Heart right ventricle (tissue), 16 donors: ENCODE measurements at regions of chr5 and their contacts with region 1.

Region 1: DNA sequence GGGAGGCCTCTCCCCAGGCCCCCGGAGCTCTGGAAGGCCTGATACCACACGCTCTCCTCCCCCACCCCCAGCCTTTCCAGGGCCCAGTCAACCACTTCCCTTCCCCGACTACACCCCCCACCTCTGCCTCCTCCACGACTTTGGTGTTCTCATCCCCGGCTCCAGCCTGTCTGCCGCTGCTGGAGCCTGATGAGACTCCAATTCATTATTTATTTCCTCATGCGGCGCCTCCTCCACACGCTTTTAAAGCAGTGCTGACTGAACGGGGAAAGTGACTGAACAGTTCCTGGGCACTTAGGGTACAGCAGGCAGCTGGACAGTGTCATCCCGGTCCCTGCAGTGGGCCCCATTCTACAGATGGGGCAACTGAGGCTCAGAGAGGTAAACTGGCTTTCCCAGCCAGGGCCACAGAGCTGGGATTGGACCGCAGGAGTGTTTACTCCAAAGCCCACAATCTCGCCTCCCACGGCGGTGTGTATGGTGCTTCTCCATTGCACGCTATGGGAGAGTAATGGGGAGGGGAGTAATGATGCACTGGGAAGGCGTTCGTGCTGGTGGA is 15.9 kb upstream of the RPL26L1 start:
- DNase-seq: peak in 1 of 2 donors; percentile 61
- ATAC-seq: peak in 6 of 8 donors; percentile 42 to 62 (median 54)
- H3K4me3 ChIP-seq: no peak overlapping the region
- H3K27ac ChIP-seq: peak overlapping the region in 4 of 10 donors; percentile 53 to 75 (median 66)
- H3K4me1 ChIP-seq: peaks cover 0 to 19% (median 6%) of the 10 kb centered on the region in 9 donors
- H3K27me3 ChIP-seq: no peaks in the 10 kb centered on the region
- CTCF ChIP-seq: no peak

Region 2: GRCh38 chr5:172463031-172463430 is 480.3 kb before region 1 on chr5:
- intact Hi-C with region 1: loop called in 3 of 10 experiments (anchors 10 kb)
- DNase-seq: no peak
- ATAC-seq: peak in 1 of 8 donors; percentile 42
- H3K4me3 ChIP-seq: no peak overlapping the region
- H3K27ac ChIP-seq: no peak overlapping the region
- H3K4me1 ChIP-seq: peaks cover 0 to 37% (median 7%) of the 10 kb centered on the region in 9 donors
- H3K27me3 ChIP-seq: no peaks in the 10 kb centered on the region
- CTCF ChIP-seq: no peak

Region 3: DNA sequence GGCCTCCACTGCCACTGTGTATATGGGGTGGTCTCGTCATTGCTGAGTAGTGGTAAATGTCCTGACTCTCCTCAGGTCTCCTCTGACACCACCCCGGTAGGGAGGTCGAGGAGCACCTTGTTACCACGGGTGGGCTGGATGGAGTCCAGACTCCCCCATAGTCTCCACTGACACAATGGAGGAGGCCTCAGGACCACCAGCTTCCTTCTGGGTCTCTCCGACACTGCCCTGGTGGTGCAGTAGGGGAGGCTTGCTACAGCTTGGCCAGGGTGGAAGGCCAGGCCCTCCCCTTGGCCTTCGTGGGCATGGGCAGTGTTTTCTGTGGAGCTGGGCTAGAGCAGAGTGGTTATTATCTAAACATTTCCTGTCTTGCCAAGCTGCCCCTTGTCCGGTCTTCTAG is 473.7 kb before region 1 on chr5:
- intact Hi-C with region 1: loop called in 6 of 10 experiments (anchors 5 to 10 kb)
- DNase-seq: no peak
- ATAC-seq: no peak
- H3K4me3 ChIP-seq: no peak overlapping the region
- H3K27ac ChIP-seq: no peak overlapping the region
- H3K4me1 ChIP-seq: no peaks in the 10 kb centered on the region
- H3K27me3 ChIP-seq: no peaks in the 10 kb centered on the region
- CTCF ChIP-seq: no peak

Region 4: DNA sequence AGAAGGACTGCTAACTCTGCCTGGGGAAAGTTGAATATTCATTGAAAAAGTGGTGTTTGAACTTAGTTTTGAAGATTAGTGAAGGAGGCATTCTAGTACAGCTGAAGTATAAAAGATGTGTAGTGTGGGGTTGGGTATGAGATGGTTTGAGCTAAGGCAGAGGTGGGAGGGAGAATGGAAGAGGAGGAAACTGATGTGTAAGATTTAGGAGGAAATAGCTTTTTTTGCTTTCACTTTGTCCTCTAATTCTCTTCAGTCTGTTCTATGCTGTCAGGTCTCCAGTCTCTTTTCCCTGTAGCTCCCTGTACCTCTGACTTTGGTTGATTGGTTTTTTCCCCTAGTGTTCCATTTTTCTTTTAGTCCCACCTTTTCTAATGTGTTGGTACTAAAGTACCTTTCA is 121.8 kb after region 1 on chr5:
- intact Hi-C with region 1: no loop called
- DNase-seq: no peak
- ATAC-seq: no peak
- H3K4me3 ChIP-seq: no peak overlapping the region
- H3K27ac ChIP-seq: peak overlapping the region in 2 of 10 donors; percentile 6 to 17
- H3K4me1 ChIP-seq: peaks cover 0 to 68% (median 33%) of the 10 kb centered on the region in 9 donors
- H3K27me3 ChIP-seq: no peaks in the 10 kb centered on the region
- CTCF ChIP-seq: no peak

Region 5: DNA sequence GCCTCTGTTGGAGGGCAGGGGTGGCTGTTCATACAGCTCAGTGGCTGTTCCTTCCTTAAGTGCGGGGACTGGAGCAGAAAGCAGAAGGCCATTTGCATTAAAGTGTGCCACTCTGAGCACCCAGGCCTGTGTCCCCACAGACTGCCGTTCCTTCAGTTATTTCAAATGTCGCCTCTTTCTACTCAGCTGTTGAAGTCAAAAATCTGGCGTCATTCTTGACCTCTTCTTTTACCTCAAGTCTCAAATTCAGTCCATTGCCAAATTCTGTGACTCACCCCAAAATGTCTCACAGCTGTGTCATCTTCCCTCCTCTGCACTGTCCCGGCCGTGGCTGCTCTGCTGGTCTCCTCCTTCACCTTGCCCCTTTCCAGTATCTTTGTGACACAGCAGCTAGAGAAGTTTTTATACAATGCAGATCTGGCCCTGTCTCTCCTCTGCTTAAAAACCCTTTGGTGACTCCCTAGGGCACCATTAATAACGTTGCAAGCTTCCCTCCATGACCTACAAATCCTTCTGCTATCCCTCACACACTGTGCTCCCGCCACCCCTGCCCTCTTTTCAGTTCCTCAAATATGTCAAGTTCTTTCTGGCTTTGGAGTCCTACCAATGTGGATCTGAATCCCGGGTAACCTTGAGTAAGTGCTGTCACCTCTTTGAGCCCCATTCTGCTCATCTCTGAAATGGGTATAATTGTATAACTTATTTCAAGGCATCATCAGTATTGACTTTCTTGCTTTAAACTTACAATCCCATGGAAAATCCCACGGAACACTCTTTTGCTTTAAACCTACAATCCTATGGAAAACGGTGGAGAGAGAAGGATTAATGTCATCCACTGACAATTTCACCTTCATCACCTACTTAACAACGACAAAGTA is 771.4 kb after region 1 on chr5:
- intact Hi-C with region 1: no loop called
- DNase-seq: no peak
- ATAC-seq: peak in 2 of 8 donors; percentile 41 to 76
- H3K4me3 ChIP-seq: no peak overlapping the region
- H3K27ac ChIP-seq: peak overlapping the region in 1 of 10 donors; percentile 23
- H3K4me1 ChIP-seq: peaks cover 0 to 17% (median 0%) of the 10 kb centered on the region in 9 donors
- H3K27me3 ChIP-seq: no peaks in the 10 kb centered on the region
- CTCF ChIP-seq: no peak